Ascending aorta (tissue), 2 donors: ENCODE measurements at regions of chr3 and their contacts with region 1.

Region 1: GRCh38 chr3:72996473-72997333 is at the start of gene PPP4R2:
- DNase-seq: peak; percentile 44 to 91
- H3K4me3 ChIP-seq: peak within 1 kb of the TSS; percentile 77 to 96
- H3K27ac ChIP-seq: peak within 1 kb of the TSS; percentile 93 to 99
- H3K4me1 ChIP-seq: peaks cover 7 to 28% of the 10 kb centered on the region in 2 donors
- H3K27me3 ChIP-seq: no peaks in the 10 kb centered on the region
- CTCF ChIP-seq: peak in 1 of 3 experiments; percentile 5
- total RNA-seq, gene PPP4R2: 8.2 TPM

Region 2: GRCh38 chr3:72847751-72848702 is 148.7 kb before region 1 on chr3 and contains the start of gene SHQ1:
- intact Hi-C with region 1: loop called (anchors 1 kb)
- DNase-seq: peak; percentile 82 to 97
- H3K4me3 ChIP-seq: peak within 1 kb of the TSS; percentile 81 to 93
- H3K27ac ChIP-seq: peak within 1 kb of the TSS; percentile 76 to 82
- H3K4me1 ChIP-seq: peaks cover 7 to 9% of the 10 kb centered on the region in 2 donors
- H3K27me3 ChIP-seq: no peaks in the 10 kb centered on the region
- CTCF ChIP-seq: no peak
- total RNA-seq, gene SHQ1: 4.2 TPM

Region 3: DNA sequence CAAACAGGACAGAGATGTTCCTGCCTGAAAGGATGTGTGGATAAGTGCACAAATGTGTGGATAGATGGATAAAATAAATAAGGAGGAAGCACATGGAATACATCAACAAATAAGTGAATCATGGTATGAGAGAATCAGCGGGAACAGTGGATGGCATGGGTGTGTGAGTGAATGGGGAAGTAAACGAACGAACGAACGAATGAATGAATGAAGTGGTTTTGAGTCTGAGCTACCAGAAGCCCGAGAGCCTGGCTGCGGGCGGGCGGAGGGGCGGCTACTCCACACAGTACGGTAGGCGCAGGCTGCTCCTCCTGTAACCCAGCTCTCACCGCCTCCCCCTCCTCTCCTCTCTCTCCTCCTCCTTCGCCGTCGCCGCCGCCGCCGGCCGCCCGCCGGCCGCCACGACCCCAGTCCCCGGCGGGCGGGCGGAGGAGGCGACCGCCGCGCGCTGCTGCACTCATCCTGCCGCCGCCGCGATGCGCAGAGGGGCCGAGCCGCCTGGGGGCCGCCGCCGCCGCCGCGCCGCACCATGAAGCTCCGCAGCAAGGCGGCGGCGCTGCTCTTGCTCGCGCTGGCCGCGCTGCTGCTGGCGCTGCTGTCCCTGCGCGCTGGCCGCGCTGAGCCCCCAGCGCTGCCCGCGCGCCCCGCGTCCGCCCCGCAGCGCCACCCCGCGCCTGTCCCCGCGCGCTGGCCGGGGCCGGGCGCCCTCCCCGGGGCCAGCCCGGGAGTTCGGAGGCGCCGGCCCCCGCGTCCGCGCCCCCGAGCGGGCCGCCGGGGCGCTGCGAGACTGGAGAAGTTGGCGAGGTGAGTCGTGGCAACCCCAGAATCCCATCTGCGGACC is 108.8 kb before region 1 on chr3 and contains the start of gene GXYLT2:
- intact Hi-C with region 1: loop called (anchors 2 kb)
- DNase-seq: peak in 1 of 2 donors; percentile 78
- H3K4me3 ChIP-seq: peak within 1 kb of the TSS; percentile 54 to 80
- H3K27ac ChIP-seq: peak within 1 kb of the TSS; percentile 60 to 89
- H3K4me1 ChIP-seq: peaks cover 3% of the 10 kb centered on the region in 2 donors
- H3K27me3 ChIP-seq: no peaks in the 10 kb centered on the region
- CTCF ChIP-seq: peak in 2 of 3 experiments; percentile 3 to 29
- total RNA-seq, gene GXYLT2: 19.5 TPM

Region 4: DNA sequence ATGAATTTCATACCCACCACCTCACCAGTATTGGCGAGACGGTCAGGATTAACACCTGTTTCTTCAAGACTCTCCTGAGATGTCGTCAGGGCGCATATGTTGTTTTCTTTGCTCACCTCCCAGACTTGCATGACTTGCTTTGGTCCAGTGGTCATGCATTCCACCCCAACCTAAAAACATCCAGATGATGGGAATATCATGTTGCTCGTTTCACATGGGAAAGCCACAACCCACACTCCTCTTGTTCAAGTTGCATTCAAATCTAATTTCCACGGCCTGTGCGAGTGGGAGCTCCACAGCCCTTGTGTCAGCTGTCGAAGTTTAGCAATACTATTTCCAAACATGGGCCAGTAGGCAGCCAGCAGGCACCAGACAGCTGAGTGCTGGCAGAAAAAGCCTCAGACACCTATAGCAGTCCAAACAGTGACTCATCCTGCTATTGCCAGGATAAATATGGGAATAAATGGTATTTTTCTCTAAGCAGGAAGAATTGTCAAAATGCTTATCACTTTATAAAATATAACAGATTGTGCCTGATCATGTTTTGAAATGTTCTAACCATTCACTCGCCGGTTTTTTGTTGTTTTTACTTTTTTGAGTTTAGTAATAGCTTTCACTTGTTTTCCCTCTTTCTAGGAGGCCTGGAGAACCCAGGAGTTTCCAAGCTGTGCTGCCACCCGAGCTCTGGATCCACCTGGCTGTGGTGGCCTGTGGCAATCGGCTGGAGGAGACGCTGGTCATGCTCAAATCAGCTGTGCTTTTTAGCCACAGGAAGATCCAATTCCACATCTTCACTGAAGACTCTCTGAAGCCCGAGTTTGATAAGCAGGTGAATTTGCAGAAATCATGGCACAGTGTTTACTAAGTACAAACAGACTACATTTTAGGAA is 88.7 kb before region 1 on chr3:
- intact Hi-C with region 1: loop called (anchors 2 kb)
- DNase-seq: peak; percentile 33 to 91
- H3K4me3 ChIP-seq: peak overlapping the region in 1 of 2 donors; percentile 34
- H3K27ac ChIP-seq: peak overlapping the region; percentile 80 to 84
- H3K4me1 ChIP-seq: peaks cover 13 to 59% of the 10 kb centered on the region in 2 donors
- H3K27me3 ChIP-seq: no peaks in the 10 kb centered on the region
- CTCF ChIP-seq: no peak

Region 5: DNA sequence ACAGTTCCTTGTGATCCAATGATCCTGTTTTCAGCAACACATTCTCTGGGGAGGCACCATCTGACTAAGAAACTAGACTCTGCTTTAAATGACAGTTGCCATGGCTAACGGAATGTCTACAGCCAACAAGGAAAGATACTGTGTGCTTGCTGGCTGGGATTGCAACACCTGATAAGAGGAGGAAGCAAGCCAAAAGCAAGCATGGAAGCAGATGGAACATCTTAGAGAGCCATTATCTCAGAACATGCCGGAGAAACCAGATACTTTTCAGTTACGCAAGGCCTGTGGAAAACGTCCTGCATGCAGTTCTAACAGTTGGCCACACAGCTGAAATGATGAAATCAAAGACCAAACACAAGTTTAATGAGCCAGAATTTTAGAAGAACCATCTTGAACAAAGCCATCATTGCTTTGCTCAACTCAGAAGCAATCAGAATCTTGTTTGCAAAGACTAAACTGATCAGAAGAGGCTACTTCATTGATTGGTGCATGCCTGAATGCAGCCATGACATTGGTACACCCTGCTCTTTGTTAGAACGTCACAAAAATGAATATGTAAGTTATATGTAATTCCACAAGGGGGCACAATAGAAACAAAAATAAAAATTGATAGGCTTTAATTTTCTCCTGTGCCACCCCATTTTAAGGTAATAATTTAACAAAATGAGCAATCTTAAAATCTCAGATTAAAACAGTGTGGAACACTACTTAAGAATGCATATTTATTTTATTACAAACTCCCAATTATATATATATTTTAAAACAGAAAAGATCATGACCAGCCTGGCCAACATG is 58.0 kb before region 1 on chr3:
- intact Hi-C with region 1: loop called (anchors 2 kb)
- DNase-seq: peak in 1 of 2 donors; percentile 84
- H3K4me3 ChIP-seq: no peak overlapping the region
- H3K27ac ChIP-seq: peak overlapping the region; percentile 17 to 62
- H3K4me1 ChIP-seq: peaks cover 2 to 11% of the 10 kb centered on the region in 2 donors
- H3K27me3 ChIP-seq: no peaks in the 10 kb centered on the region
- CTCF ChIP-seq: peak in 2 of 3 experiments; percentile 37 to 51

Region 6: DNA sequence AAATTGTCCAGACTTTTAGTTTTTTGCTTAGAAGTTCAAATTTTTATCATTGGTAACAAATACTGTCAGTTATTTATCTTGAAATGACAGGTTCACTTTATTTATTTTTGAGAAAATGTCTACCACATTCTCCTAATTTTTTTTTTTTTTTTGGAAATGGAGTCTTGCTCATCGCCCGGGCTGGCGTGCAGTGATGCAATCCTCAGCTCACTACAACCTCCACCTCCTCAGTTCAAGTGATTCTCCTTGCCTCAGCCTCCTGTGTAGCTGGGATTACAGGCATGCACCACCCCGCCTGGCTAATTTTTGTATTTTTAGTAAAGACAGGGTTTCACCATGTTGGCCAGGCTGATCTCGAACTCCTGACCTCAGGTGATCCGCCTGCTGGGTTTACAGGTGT is 48.7 kb after region 1 on chr3:
- intact Hi-C with region 1: loop called (anchors 2 kb)
- DNase-seq: no peak
- H3K4me3 ChIP-seq: no peak overlapping the region
- H3K27ac ChIP-seq: no peak overlapping the region
- H3K4me1 ChIP-seq: peaks cover 0 to 11% of the 10 kb centered on the region in 2 donors
- H3K27me3 ChIP-seq: no peaks in the 10 kb centered on the region
- CTCF ChIP-seq: no peak

Region 7: DNA sequence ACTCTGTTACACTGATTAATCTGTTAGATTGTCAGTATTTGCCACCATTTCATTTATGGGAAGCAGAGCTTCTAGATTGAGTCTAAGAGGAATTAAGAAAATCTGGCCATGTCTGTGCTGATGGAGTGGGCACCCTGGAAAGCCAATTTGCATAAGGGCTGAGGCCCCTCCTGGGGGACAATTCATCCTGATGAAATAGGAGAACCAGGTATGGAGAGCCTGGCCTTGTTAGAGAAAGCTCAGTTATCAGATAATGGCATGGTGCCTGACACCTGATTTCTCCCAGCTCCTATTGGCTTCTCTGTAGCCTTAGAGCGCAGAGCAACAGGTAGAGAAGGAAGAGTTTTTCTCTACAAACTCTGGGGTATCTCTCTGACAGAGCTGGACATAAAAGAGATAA is 179.0 kb after region 1 on chr3:
- intact Hi-C with region 1: no loop called
- DNase-seq: no peak
- H3K4me3 ChIP-seq: no peak overlapping the region
- H3K27ac ChIP-seq: no peak overlapping the region
- H3K4me1 ChIP-seq: no peaks in the 10 kb centered on the region
- H3K27me3 ChIP-seq: no peaks in the 10 kb centered on the region
- CTCF ChIP-seq: no peak